HEK293 (cell line): ENCODE measurements at regions of chrX and their contacts with region 1.

Region 1: GRCh38 chrX:85084770-85085393 is 81.2 kb downstream of the APOOL start:
- H3K4me3 ChIP-seq: no peak overlapping the region
- H3K27ac ChIP-seq: no peak overlapping the region
- H3K4me1 ChIP-seq: no peaks in the 10 kb centered on the region
- CTCF ChIP-seq: peak; percentile 69; the same call in 1 of the 2 replicates

Region 2: DNA sequence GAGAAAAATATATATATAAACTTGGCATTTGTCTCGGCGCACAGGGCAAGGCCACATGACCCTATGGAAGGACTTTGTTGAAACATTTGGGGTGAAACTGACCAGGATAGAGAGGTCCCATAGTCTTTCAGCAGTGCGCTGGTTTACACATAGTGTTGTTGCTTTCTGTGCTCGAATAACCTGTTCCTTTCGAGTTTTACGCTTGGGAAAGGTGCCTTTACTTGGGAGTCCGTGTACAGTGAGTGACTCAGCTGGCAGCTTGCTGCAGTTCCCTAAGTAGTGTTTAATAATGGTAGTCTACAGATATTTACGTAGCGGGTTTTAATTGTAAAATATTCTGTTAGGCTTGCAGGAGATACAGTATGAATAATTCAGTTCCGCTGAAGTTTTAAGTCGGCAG is 80.6 kb before region 1 on chrX:
- CTCF ChIA-PET with region 1: no interaction called
- POLR2A ChIA-PET with region 1: no interaction called
- H3K4me3 ChIP-seq: peak overlapping the region; percentile 56
- H3K27ac ChIP-seq: no peak overlapping the region; the same call in 1 of the 2 replicates
- H3K4me1 ChIP-seq: no peaks in the 10 kb centered on the region
- CTCF ChIP-seq: no peak

Region 3: DNA sequence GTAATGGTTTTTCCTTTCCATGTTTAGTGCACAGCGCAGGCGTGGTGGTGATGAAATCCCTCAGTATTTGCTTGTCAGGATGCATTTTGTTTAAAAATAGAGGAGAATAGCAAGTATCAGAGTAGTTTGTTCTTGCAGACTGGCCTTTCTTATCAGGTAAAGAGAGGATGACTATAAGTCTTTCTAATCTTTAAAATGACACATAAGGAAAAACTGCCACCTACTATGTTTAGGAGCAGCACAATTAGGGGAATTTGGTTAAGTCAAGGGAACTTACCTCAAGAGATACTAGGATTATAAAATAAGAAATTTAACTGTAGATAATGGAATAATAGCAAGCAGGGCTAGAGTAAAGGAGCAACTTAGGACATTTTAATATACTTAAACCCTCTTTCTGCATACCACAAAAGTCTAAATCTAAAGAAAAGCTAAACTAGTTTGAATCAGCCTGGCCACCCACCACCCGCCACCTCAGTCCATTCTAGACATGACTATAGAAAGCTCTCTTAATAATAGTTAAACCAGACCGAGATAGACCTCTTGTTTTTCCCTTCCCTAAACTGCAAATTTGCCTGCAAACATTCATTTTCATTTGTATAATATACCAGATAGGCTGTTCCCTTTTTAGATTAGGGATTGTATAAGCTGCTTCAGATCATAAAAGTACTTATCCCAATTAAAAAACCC is 19.2 kb before region 1 on chrX:
- CTCF ChIA-PET with region 1: interaction called, 15 read pairs
- POLR2A ChIA-PET with region 1: no interaction called
- H3K4me3 ChIP-seq: no peak overlapping the region
- H3K27ac ChIP-seq: no peak overlapping the region
- H3K4me1 ChIP-seq: no peaks in the 10 kb centered on the region
- CTCF ChIP-seq: no peak

Region 4: GRCh38 chrX:85140964-85141363 is 56.1 kb after region 1 on chrX:
- CTCF ChIA-PET with region 1: no interaction called
- POLR2A ChIA-PET with region 1: no interaction called
- H3K4me3 ChIP-seq: no peak overlapping the region
- H3K27ac ChIP-seq: no peak overlapping the region
- H3K4me1 ChIP-seq: no peaks in the 10 kb centered on the region
- CTCF ChIP-seq: no peak